A673 (cell line): ENCODE measurements at regions of chr17 and their contacts with region 1.

Region 1: DNA sequence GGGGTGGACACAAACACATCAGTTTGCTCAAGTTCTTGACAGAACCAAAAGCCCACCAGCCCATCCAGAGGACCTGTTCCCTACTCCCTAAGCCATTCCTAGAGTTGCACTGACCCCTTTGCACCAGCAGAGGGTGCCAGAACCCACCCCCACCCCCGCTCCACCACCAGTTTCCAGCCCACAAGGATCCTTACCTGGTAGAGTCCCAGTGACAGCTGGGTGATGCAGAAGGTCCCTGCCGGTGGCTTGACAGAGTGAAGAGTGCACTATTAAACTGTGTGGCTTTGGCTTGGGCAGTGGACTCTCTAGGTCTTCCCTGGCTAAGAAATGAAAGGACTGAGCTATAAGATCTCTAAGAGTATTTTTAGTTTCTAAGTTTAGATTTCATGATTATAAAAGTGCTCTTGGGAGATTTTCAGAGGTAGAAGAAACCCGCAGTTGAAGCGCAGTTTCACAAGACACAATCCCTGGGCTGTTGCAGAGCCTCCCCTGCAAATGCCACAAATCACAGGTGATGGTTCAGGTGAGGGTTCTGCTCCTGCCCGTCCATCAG is 73.3 kb upstream of the MTMR4 start:
- DNase-seq: peak; percentile 67
- H3K4me3 ChIP-seq: no peak overlapping the region
- H3K27ac ChIP-seq: no peak overlapping the region
- H3K4me1 ChIP-seq: no peaks in the 10 kb centered on the region
- H3K27me3 ChIP-seq: no peaks in the 10 kb centered on the region
- CTCF ChIP-seq: peak; percentile 95

Region 2: DNA sequence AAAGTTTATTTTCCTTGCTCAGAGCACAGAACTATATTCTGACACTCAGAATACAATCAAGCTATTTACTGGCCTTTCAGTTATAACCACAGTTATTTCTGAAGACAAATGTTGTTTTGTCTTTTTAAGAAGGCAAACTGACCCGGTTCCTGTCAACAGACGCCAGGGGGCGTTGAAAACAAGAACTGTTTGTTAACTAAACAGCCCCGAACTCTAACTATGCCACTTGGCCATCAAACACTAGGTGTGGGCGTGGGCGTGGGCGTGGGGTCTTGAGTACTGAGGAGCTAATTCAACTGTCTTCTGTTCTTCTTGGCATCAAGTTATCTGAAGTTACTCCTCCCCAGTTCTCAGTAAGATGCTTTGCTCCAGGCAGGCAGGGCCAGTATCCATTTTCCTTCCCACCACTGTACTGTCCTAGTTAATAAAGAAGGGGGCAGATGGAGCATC is 10.1 kb before region 1 on chr17:
- CTCF ChIA-PET with region 1: interaction called, 10 read pairs
- POLR2A ChIA-PET with region 1: no interaction called
- intact Hi-C with region 1: no loop called
- DNase-seq: peak; percentile 75
- H3K4me3 ChIP-seq: no peak overlapping the region
- H3K27ac ChIP-seq: no peak overlapping the region
- H3K4me1 ChIP-seq: no peaks in the 10 kb centered on the region
- H3K27me3 ChIP-seq: no peaks in the 10 kb centered on the region
- CTCF ChIP-seq: peak; percentile 79

Region 3: DNA sequence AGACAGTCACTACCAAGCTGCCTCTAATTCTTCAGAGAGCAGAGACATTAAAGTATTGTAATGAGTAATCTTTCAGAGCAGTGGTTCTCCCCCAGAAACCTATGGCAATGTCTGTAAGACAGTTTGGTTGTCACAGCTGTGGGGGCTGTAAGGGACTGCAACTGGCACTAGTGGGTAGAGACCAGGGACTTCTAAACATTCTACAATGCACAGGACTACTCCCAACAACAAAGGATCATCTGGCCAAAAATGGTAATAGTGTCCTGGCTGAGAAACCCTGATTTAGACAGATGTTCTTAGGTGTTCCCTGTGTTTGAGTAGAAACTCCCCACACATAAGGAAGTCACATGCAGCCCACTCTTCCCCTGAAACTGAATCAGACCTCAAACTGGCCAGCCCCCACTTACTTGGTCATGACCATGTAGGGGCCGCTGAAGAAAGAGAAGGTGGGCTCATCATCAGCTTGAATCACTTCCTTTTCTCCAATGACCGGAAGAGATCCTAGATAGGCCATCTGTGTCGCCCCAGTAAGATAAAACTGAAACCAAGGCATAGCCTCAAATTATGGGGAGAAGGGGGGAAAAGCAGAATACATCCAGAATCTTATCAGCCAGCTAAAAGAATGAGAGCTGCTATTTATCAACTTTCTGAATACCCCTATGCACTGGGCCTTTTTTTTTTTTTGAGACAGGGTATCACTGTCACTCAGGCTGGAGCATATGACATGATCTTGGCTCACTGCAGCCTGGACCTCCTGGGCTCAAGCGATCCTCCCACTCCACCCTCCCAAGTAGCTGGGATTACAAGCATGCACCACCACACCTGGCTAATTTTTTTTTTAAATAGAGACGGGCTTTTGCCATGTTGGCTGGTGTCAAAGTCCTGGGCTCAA is 28.2 kb after region 1 on chr17:
- CTCF ChIA-PET with region 1: no interaction called
- POLR2A ChIA-PET with region 1: no interaction called
- intact Hi-C with region 1: no loop called
- DNase-seq: no peak
- H3K4me3 ChIP-seq: no peak overlapping the region
- H3K27ac ChIP-seq: no peak overlapping the region
- H3K4me1 ChIP-seq: no peaks in the 10 kb centered on the region
- H3K27me3 ChIP-seq: no peaks in the 10 kb centered on the region
- CTCF ChIP-seq: no peak

Region 4: GRCh38 chr17:58679263-58680037 is 91.7 kb after region 1 on chr17:
- CTCF ChIA-PET with region 1: interaction called, 4 read pairs
- POLR2A ChIA-PET with region 1: interaction called, 10 read pairs
- intact Hi-C with region 1: no loop called
- DNase-seq: peak; percentile 29
- H3K4me3 ChIP-seq: no peak overlapping the region
- H3K27ac ChIP-seq: no peak overlapping the region
- H3K4me1 ChIP-seq: no peaks in the 10 kb centered on the region
- H3K27me3 ChIP-seq: no peaks in the 10 kb centered on the region
- CTCF ChIP-seq: no peak

Region 5: GRCh38 chr17:58710936-58711775 is 123.4 kb after region 1 on chr17:
- CTCF ChIA-PET with region 1: no interaction called
- POLR2A ChIA-PET with region 1: no interaction called
- intact Hi-C with region 1: loop called (anchors 5 kb)
- DNase-seq: peak; percentile 73
- H3K4me3 ChIP-seq: no peak overlapping the region
- H3K27ac ChIP-seq: no peak overlapping the region
- H3K4me1 ChIP-seq: no peaks in the 10 kb centered on the region
- H3K27me3 ChIP-seq: no peaks in the 10 kb centered on the region
- CTCF ChIP-seq: peak; percentile 89

Region 6: DNA sequence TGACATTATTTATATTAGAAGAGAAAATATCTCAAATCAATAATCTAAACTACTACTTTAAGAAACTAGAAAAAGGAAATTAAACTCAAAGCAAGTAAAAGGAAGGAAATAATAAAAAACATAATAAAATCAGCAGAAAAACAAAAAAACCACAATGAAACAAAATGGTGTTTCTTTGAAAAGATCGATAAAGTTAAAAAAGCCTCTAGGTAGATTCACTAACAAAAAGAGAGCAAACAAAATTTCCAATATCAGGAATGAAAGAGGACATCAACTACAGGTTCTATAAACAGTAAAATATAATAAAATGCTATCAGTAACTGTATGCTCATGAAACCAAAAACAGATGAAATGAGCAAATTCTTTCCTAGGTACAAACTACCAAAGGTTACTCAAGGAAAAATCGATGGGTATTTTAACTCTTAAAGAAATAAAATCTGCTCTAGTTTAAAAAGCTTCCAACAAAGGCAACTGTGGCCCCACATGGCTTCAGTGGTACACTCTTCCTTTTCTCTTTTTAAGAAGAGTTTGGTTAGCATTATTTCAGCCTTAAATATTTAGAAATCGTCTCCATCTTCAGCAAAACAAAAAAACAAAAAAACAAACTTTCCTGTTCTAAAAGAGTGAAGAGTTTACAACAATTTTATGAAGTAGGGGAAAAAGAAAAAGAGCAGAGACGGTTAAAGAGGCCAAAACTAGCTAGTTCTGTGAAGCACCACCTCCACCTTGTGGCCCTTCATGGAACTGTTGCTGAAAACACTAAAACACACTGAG is 416.7 kb after region 1 on chr17:
- CTCF ChIA-PET with region 1: interaction called, 7 read pairs
- POLR2A ChIA-PET with region 1: no interaction called
- intact Hi-C with region 1: loop called (anchors 1 kb)
- DNase-seq: peak; percentile 75
- H3K4me3 ChIP-seq: no peak overlapping the region
- H3K27ac ChIP-seq: peak overlapping the region; percentile 25
- H3K4me1 ChIP-seq: peaks cover 25% of the 10 kb centered on the region
- H3K27me3 ChIP-seq: no peaks in the 10 kb centered on the region
- CTCF ChIP-seq: peak; percentile 94

Region 7: GRCh38 chr17:59378458-59379074 is 790.8 kb after region 1 on chr17:
- CTCF ChIA-PET with region 1: interaction called, 10 read pairs
- POLR2A ChIA-PET with region 1: no interaction called
- intact Hi-C with region 1: no loop called
- DNase-seq: no peak
- H3K4me3 ChIP-seq: no peak overlapping the region
- H3K27ac ChIP-seq: no peak overlapping the region
- H3K4me1 ChIP-seq: peaks cover 9% of the 10 kb centered on the region
- H3K27me3 ChIP-seq: no peaks in the 10 kb centered on the region
- CTCF ChIP-seq: no peak